GM10248 (cell line): ENCODE measurements at regions of chr17 and their contacts with region 1.

Region 1: DNA sequence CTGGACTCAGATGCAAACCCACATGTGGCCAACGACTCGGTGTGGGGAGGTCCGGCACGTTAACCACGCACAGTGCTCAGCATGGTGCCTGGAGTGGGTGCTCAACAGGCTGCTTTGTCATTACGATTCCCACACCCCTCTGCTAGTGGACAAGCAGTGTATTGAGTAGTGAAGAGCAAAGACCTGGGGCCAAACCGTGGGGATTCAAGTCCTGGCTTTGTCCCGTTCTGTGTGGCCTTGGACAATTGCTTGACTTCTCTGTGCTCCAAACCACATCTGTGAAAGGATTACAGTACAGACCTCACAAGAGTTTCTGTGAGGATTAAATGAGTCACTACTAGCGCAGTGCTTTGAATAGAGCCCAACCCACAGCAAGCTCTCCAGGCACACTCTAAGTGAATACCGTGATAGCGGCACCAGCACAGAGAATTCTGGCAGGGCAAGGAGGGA is 33.8 kb downstream of the TRPV2 start:
- DNase-seq: no peak
- CTCF ChIP-seq: no peak

Region 2: GRCh38 chr17:16374129-16374528 is 75.0 kb before region 1 on chr17:
- CTCF ChIA-PET with region 1: no interaction called
- POLR2A ChIA-PET with region 1: no interaction called
- DNase-seq: no peak
- CTCF ChIP-seq: no peak

Region 3: GRCh38 chr17:16463358-16464302 is 14.5 kb after region 1 on chr17:
- CTCF ChIA-PET with region 1: interaction called, 12 read pairs
- POLR2A ChIA-PET with region 1: no interaction called
- DNase-seq: no peak
- CTCF ChIP-seq: no peak

Region 4: DNA sequence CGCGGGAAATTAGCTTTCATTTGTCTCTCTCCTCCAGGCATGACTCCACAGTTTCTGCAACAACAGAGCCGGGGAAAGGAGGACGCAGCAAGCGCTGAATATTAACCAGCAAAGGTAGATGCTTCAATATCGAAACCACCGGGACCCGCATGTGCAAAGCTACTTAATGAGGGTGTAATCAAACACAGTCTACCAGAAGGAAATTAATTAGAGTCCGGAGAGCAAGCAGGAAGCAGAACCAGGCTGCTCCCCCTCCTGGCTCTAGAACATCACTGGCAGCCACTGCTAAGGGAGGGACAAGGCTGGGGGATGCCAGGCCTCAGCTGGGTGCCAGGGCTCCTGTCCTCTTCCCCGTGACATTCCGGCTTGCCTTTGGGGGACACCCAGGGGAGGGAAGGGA is 21.1 kb after region 1 on chr17:
- CTCF ChIA-PET with region 1: interaction called, 13 read pairs
- POLR2A ChIA-PET with region 1: no interaction called
- DNase-seq: no peak
- CTCF ChIP-seq: no peak

Region 5: DNA sequence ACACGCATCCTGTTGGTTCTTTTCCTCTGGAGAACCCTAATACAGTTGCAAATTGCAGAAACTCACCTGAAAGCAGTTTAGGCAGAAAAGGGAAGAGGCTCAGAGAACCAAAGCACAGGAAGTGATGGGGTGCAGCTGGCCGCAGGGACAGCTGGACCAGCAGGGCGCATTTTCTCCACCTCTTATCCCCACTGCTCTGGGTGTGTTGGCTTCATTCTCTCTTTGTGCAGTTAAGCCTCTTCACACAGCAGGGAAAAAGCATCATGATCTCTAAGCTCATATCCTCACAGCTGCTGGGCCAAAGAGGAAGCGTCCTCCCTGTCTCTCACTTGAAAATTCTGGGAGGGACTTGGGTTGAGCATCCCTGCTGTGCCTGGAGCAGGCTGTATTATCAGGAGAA is 62.9 kb after region 1 on chr17:
- CTCF ChIA-PET with region 1: interaction called, 76 read pairs
- POLR2A ChIA-PET with region 1: no interaction called
- DNase-seq: no peak
- CTCF ChIP-seq: no peak

Region 6: DNA sequence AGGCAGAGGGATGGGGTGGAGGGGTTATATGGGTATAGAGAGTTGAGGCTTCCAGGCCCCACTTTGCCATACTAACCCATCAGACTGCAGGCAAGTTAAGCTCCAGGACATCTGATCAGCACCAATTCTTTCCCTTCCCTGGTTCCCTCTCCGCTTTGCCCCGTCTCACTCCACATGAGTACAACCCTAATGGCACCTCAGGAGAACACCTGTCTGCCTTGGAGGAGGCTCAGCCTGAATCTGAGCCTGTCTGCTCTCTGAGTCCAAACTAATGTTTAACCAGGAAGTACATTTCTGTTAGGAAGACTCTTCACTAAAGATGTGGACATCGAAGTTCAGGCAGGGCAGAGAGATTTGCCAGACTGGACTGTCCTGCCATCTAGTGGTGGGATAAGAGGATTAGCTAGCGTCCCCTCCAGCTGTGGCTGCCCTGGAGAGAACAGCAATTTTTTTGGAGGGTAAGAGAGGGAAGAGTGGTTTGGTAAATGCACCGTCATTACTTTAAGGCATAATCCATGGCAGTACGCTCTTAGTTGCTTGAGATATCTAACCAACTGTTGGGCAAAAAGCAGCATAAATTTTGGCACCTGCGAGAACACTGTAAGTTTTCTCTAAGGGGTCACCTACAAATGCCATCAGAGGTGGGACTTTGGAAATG is 72.1 kb after region 1 on chr17:
- CTCF ChIA-PET with region 1: interaction called, 76 read pairs
- POLR2A ChIA-PET with region 1: no interaction called
- DNase-seq: peak; percentile 86
- CTCF ChIP-seq: peak; percentile 77